Activated T-helper 2 cell treated with anti-CD3 and anti-CD28 coated beads, Interferon-gamma antibody, Interleukin-2, Interleukin-4, amounts not matched to agents 10 μg/mL and 5 μg/mL and 100 μg/mL, durations not matched to agents 14 hours and 24 hours and 36 hours (primary cell): ENCODE measurements at regions of chr6 and their contacts with region 1.

Region 1: GRCh38 chr6:139375232-139376016 is 976 bp upstream of the CITED2 start:
- DNase-seq: peak; percentile 83
- H3K4me3 Mint-ChIP-seq: peak overlapping the region; percentile 92
- H3K27ac Mint-ChIP-seq: peak overlapping the region; percentile 98
- H3K4me1 Mint-ChIP-seq: peaks cover 40% of the 10 kb centered on the region
- H3K27me3 Mint-ChIP-seq: no peaks in the 10 kb centered on the region

Region 2: DNA sequence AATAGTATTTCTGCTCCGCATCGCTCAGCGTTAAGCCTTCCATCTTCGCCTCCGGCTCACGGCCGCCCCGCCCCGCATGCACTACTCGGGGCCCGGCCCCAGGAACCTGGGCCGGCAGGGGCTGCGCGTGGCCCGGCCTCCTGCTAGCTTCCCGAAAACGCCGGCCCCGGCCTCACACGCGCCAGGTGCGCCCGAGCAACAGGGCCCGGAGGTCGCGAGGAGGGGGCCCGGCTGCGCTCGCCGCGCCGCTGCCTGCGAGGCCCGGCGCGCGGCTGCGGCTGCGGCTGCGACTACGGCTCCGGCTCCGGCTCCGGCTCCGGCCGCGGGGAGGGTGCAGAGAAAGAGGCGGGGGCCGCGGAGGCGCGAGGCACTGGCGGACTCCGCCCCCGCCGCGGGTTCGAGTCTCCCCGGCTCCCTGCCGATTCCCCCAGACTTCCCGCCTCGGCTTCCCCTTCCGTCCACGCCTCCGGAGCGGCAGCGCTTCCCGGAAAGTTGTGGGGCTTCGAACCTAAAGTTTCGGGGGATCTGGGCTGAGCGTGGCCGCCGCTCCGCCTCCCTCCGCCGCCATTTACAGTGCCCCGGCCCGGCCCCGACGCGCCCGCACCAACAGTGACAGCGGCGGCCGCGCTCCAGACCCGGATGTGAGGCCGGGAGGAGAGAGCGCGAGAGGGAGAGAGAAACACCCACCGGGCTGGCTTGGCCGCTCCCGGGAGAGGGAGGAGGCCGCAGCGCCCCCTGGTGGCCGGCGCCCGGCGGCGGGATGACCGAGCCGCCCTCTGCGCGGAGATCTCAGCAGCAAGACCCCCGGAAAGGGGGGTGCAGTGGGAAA is 387.6 kb before region 1 on chr6 and contains the start of gene REPS1:
- intact Hi-C with region 1: loop called (anchors 1 kb)
- DNase-seq: peak; percentile 86
- H3K4me3 Mint-ChIP-seq: peak within 1 kb of the TSS; percentile 92
- H3K27ac Mint-ChIP-seq: peak within 1 kb of the TSS; percentile 95
- H3K4me1 Mint-ChIP-seq: peaks cover 6% of the 10 kb centered on the region
- H3K27me3 Mint-ChIP-seq: peaks cover 2% of the 10 kb centered on the region
- total RNA-seq, gene REPS1: 96.3 and 99.8 TPM in 2 replicates

Region 3: GRCh38 chr6:139448051-139448649 is 72.7 kb after region 1 on chr6:
- intact Hi-C with region 1: loop called (anchors 5 kb)
- DNase-seq: no peak
- H3K4me3 Mint-ChIP-seq: no peak overlapping the region
- H3K27ac Mint-ChIP-seq: no peak overlapping the region
- H3K4me1 Mint-ChIP-seq: peaks cover 18% of the 10 kb centered on the region
- H3K27me3 Mint-ChIP-seq: no peaks in the 10 kb centered on the region

Region 4: GRCh38 chr6:139600919-139601475 is 225.6 kb after region 1 on chr6:
- intact Hi-C with region 1: loop called (anchors 2 kb)
- DNase-seq: no peak
- H3K4me3 Mint-ChIP-seq: no peak overlapping the region
- H3K27ac Mint-ChIP-seq: peak overlapping the region; percentile 57
- H3K4me1 Mint-ChIP-seq: peaks cover 5% of the 10 kb centered on the region
- H3K27me3 Mint-ChIP-seq: peaks cover 1% of the 10 kb centered on the region

Region 5: GRCh38 chr6:140043336-140043735 is 667.9 kb after region 1 on chr6:
- intact Hi-C with region 1: loop called (anchors 10 kb)
- DNase-seq: no peak
- H3K4me3 Mint-ChIP-seq: no peak overlapping the region
- H3K27ac Mint-ChIP-seq: no peak overlapping the region
- H3K4me1 Mint-ChIP-seq: peaks cover 8% of the 10 kb centered on the region
- H3K27me3 Mint-ChIP-seq: no peaks in the 10 kb centered on the region

Region 6: DNA sequence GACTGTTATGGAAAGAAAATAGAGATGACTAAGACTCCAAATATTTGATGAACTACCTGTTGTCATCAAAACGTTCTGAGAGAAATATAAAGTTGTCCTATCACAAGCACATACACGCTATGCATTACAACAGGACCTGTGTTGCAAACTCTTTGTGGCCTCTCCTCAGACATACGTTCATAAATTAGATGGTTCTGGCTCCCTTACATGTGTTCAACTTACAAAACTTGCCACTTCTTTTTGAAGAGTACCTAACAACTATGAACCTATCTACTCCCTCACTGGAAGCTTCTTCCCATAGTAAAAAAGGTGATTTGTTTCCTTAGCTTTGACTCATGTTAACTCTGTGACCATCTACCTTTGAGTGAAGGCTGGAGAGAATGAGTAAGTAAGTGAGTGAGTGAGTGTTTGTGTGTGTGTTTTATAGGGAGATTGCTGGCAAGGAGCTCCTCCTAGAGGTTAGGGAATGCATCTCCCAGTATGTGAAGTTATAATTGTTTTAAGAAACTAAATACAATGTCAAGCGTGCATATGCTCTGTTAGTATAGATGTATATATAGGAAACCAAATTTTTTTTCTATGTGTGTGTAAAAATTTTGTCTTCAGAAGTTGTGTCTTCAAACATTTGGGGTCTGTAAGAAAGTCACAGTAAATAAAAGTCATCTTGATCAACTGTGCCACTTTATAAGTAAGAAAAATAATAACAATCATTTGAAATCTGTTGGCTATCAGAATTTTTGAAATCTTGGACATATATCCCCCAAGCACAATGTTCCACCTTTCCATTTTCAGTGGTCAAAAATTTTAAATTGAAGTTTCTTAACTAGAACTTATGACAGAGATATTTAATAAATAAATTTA is 1546.2 kb after region 1 on chr6:
- intact Hi-C with region 1: loop called (anchors 5 kb)
- DNase-seq: no peak
- H3K4me3 Mint-ChIP-seq: no peak overlapping the region
- H3K27ac Mint-ChIP-seq: no peak overlapping the region
- H3K4me1 Mint-ChIP-seq: no peaks in the 10 kb centered on the region
- H3K27me3 Mint-ChIP-seq: no peaks in the 10 kb centered on the region